ENCODE measurements at regions of chr1 and their contacts with region 1.

Region 1: DNA sequence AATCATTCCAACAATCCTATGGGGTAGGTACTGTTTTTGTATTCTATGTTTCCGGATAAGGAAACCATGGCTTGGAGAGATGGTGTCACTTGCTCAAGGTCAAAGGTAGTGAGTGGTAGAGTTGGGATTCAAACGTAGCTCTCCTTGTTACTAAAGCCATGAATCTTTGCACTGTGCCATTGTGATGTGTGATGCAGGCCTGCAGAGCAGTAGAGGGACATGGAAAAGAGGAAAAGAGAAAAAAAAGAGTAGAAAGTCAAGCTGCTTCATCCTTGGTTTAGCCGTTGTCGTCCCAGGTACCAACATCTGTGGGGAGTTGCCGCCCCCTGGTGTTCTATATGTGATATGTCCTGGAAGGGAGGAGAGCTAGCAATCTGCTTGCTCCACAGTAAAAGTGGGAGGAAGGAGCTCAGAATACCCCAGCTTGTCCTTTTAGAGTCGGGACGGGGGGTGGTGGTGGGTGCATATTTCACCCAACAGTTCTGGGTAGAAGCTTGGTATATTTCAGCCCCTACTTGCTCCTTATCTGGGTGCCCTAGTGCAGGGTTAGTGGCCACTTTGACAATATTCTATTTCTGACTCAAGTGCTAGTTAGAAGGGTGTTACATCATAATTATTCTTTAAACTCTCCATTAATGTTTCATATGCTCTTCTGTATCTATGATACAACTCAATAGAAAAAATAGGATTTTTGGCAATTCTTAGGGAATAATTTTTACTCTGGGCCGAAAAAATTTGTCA is 98.4 kb downstream of the EBNA1BP2 start:
- DNase-seq: peak in 1 of 2 donors; percentile 84
- H3K4me3 ChIP-seq: no peak overlapping the region
- H3K27ac ChIP-seq: no peak overlapping the region
- H3K4me1 ChIP-seq: peaks cover 0 to 1% of the 10 kb centered on the region in 2 donors
- H3K27me3 ChIP-seq: no peaks in the 10 kb centered on the region
- CTCF ChIP-seq: peak; percentile 78 to 88 (median 87)

Region 2: GRCh38 chr1:42576935-42577334 is 496.7 kb before region 1 on chr1:
- intact Hi-C with region 1: loop called (anchors 5 kb)
- DNase-seq: no peak
- H3K4me3 ChIP-seq: no peak overlapping the region
- H3K27ac ChIP-seq: no peak overlapping the region
- H3K4me1 ChIP-seq: no peaks in the 10 kb centered on the region
- H3K27me3 ChIP-seq: no peaks in the 10 kb centered on the region
- CTCF ChIP-seq: no peak

Region 3: GRCh38 chr1:42913426-42914091 is 160.1 kb before region 1 on chr1:
- intact Hi-C with region 1: loop called (anchors 1 kb)
- DNase-seq: peak in 1 of 2 donors; percentile 80
- H3K4me3 ChIP-seq: no peak overlapping the region
- H3K27ac ChIP-seq: no peak overlapping the region
- H3K4me1 ChIP-seq: no peaks in the 10 kb centered on the region
- H3K27me3 ChIP-seq: no peaks in the 10 kb centered on the region
- CTCF ChIP-seq: peak; percentile 74 to 82 (median 80)

Region 4: GRCh38 chr1:42968654-42969053 is 105.0 kb before region 1 on chr1:
- intact Hi-C with region 1: loop called (anchors 5 kb)
- DNase-seq: no peak
- H3K4me3 ChIP-seq: no peak overlapping the region
- H3K27ac ChIP-seq: no peak overlapping the region
- H3K4me1 ChIP-seq: peaks cover 4 to 6% of the 10 kb centered on the region in 2 donors
- H3K27me3 ChIP-seq: no peaks in the 10 kb centered on the region
- CTCF ChIP-seq: no peak